ENCODE measurements at regions of chr16 and their contacts with region 1.

Region 1: GRCh38 chr16:58336332-58337089 is 41.7 kb upstream of the PRSS54 start:
- DNase-seq: peak; percentile 51
- ATAC-seq: peak; percentile 97
- H3K4me3 ChIP-seq: no peak overlapping the region
- H3K27ac ChIP-seq: no peak overlapping the region
- H3K4me1 ChIP-seq: no peaks in the 10 kb centered on the region
- H3K27me3 ChIP-seq: no peaks in the 10 kb centered on the region
- CTCF ChIP-seq: peak; percentile 86 to 97 (median 94)
- EP300 ChIP-seq: no peak
- POLR2A ChIP-seq: no peak
- RAD21 ChIP-seq: peak; percentile 94

Region 2: GRCh38 chr16:57810197-57811031 is 526.1 kb before region 1 on chr16:
- CTCF ChIA-PET with region 1: no interaction called
- POLR2A ChIA-PET with region 1: no interaction called
- RAD21 ChIA-PET with region 1: no interaction called
- SMC1A ChIA-PET with region 1: no interaction called
- in situ Hi-C with region 1: no loop called
- intact Hi-C with region 1: no loop called
- DNase-seq: peak; percentile 73
- ATAC-seq: peak; percentile 99
- H3K4me3 ChIP-seq: no peak overlapping the region; the same call in 1 of the 2 replicates
- H3K27ac ChIP-seq: peak overlapping the region; percentile 66
- H3K4me1 ChIP-seq: peaks cover 23% of the 10 kb centered on the region
- H3K27me3 ChIP-seq: no peaks in the 10 kb centered on the region
- CTCF ChIP-seq: no peak
- EP300 ChIP-seq: peak; percentile 13 to 59; a peak in 2 of 4 replicates
- POLR2A ChIP-seq: peak; percentile 72
- RAD21 ChIP-seq: no peak

Region 3: GRCh38 chr16:58114827-58115825 is 221.4 kb before region 1 on chr16:
- CTCF ChIA-PET with region 1: no interaction called
- POLR2A ChIA-PET with region 1: no interaction called
- RAD21 ChIA-PET with region 1: no interaction called
- SMC1A ChIA-PET with region 1: no interaction called
- in situ Hi-C with region 1: no loop called
- intact Hi-C with region 1: no loop called
- DNase-seq: no peak
- ATAC-seq: no peak
- H3K4me3 ChIP-seq: no peak overlapping the region
- H3K27ac ChIP-seq: no peak overlapping the region
- H3K4me1 ChIP-seq: no peaks in the 10 kb centered on the region
- H3K27me3 ChIP-seq: no peaks in the 10 kb centered on the region
- CTCF ChIP-seq: no peak
- EP300 ChIP-seq: no peak
- POLR2A ChIP-seq: no peak
- RAD21 ChIP-seq: no peak

Region 4: DNA sequence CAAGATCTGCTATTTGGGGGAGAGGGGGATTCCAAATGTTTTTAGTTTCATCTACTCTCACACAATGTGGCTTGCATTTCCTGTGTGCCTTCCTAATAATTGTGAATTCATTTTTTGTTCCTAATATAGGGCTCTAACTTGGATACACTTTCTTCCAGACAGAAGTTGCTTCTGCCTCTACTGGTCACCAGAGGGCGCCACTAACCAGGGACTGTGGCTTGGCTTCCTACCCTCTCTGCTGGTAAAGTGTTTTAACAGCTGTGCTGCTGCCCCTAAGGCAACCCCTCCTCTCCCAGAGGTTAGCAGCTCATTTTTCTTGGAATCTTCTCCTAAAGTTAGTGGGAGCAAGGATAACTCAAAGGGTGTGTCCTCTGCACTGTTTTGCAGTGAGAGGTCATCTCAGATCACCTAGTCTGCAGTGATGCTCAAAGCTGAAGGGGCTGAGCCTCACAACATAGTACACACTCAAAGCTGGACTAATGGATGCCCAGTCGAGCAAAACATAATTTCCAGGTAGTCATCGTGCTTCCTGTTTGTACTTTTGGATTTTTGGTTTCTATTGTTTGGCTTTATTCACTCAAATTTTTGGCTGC is 36.7 kb before region 1 on chr16:
- CTCF ChIA-PET with region 1: interaction called, 17 read pairs
- POLR2A ChIA-PET with region 1: no interaction called
- RAD21 ChIA-PET with region 1: interaction called, 3 read pairs
- SMC1A ChIA-PET with region 1: no interaction called
- in situ Hi-C with region 1: no loop called
- intact Hi-C with region 1: no loop called
- DNase-seq: no peak
- ATAC-seq: peak; percentile 40; the same call in 1 of the 3 replicates
- H3K4me3 ChIP-seq: no peak overlapping the region
- H3K27ac ChIP-seq: no peak overlapping the region
- H3K4me1 ChIP-seq: no peaks in the 10 kb centered on the region
- H3K27me3 ChIP-seq: no peaks in the 10 kb centered on the region
- CTCF ChIP-seq: peak; percentile 15 to 51 (median 49); a peak in 4 of 6 replicates
- EP300 ChIP-seq: no peak
- POLR2A ChIP-seq: no peak
- RAD21 ChIP-seq: 0 out of 2 replicates have a peak, but pooled peaks have one; percentile 6

Region 5: GRCh38 chr16:58348986-58349385 is 12.5 kb after region 1 on chr16:
- CTCF ChIA-PET with region 1: interaction called, 12 read pairs
- POLR2A ChIA-PET with region 1: interaction called, 4 read pairs
- RAD21 ChIA-PET with region 1: interaction called, 5 read pairs
- SMC1A ChIA-PET with region 1: interaction called, 5 read pairs
- in situ Hi-C with region 1: no loop called
- intact Hi-C with region 1: no loop called
- DNase-seq: no peak
- ATAC-seq: no peak; the same call in 2 of the 3 replicates
- H3K4me3 ChIP-seq: no peak overlapping the region
- H3K27ac ChIP-seq: no peak overlapping the region
- H3K4me1 ChIP-seq: no peaks in the 10 kb centered on the region
- H3K27me3 ChIP-seq: no peaks in the 10 kb centered on the region; a peak in 1 of 4 replicates
- CTCF ChIP-seq: no peak
- EP300 ChIP-seq: no peak
- POLR2A ChIP-seq: no peak
- RAD21 ChIP-seq: no peak

Region 6: DNA sequence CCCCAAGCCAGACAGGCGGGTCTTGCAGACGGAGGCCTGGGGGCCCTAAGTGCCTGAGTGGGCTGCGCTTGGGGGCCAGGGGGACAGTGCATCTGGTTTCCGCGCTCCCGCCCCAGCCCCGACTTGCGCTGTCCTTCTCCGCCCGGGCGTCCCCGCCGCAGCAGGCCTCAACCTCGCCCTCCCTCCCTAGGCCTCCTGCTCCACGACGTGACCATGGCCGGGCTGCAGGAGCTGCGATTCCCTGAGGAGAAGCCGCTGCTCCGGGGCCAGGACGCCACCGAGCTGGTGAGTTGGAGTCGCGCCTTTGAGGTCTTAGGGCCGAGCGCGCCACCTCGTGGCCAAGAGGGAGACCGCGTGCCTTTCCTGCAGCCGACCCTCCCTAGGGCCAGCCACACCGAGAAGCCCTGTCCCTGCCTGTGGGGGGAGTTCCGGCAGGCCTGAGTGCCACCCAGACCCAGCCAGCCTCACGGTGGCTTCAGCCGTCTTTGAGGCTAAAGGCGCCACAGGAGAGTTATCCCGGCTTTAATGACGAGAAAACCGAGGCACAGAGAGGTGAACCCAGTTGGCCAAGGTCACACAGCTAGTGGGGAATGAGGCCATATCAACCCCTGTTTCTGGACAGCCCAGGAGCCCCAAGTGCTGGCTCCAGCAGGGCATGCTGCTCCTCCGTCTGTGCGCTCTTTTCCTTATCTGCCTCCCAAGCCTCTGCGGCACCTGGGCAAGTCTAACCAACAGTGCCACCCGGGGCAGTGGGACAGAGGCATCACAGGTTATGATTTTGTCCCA is 151.2 kb after region 1 on chr16:
- CTCF ChIA-PET with region 1: interaction called, 209 read pairs
- POLR2A ChIA-PET with region 1: interaction called, 5 read pairs
- RAD21 ChIA-PET with region 1: interaction called, 91 read pairs
- SMC1A ChIA-PET with region 1: interaction called, 84 read pairs
- in situ Hi-C with region 1: loop called (anchors 5 kb)
- intact Hi-C with region 1: loop called (anchors 1 kb)
- DNase-seq: no peak
- ATAC-seq: peak; percentile 97
- H3K4me3 ChIP-seq: no peak overlapping the region
- H3K27ac ChIP-seq: no peak overlapping the region
- H3K4me1 ChIP-seq: no peaks in the 10 kb centered on the region
- H3K27me3 ChIP-seq: no peaks in the 10 kb centered on the region; a peak in 1 of 4 replicates
- CTCF ChIP-seq: peak; percentile 85 to 92 (median 90)
- EP300 ChIP-seq: no peak
- POLR2A ChIP-seq: no peak
- RAD21 ChIP-seq: peak; percentile 77

Region 7: GRCh38 chr16:58661199-58661830 is 324.8 kb after region 1 on chr16:
- CTCF ChIA-PET with region 1: interaction called, 22 read pairs
- POLR2A ChIA-PET with region 1: no interaction called
- RAD21 ChIA-PET with region 1: interaction called, 10 read pairs
- SMC1A ChIA-PET with region 1: interaction called, 5 read pairs
- in situ Hi-C with region 1: loop called (anchors 25 kb)
- intact Hi-C with region 1: loop called (anchors 5 kb)
- DNase-seq: no peak
- ATAC-seq: peak; percentile 96
- H3K4me3 ChIP-seq: no peak overlapping the region
- H3K27ac ChIP-seq: no peak overlapping the region
- H3K4me1 ChIP-seq: no peaks in the 10 kb centered on the region
- H3K27me3 ChIP-seq: no peaks in the 10 kb centered on the region
- CTCF ChIP-seq: peak; percentile 57 to 90 (median 70); a peak in 5 of 6 replicates
- EP300 ChIP-seq: no peak
- POLR2A ChIP-seq: no peak
- RAD21 ChIP-seq: peak; percentile 86